ENCODE measurements at regions of chr11 and their contacts with region 1.

Region 1: GRCh38 chr11:58788355-58789023 is 56.0 kb downstream of the GLYATL2 start:
- DNase-seq: peak; percentile 67
- ATAC-seq: peak; percentile 98
- H3K4me3 ChIP-seq: no peak overlapping the region
- H3K27ac ChIP-seq: no peak overlapping the region
- H3K4me1 ChIP-seq: peaks cover 7% of the 10 kb centered on the region
- H3K27me3 ChIP-seq: no peaks in the 10 kb centered on the region
- CTCF ChIP-seq: peak; percentile 92
- EP300 ChIP-seq: no peak
- POLR2A ChIP-seq: no peak
- RAD21 ChIP-seq: peak; percentile 85

Region 2: GRCh38 chr11:58524232-58525036 is 264.1 kb before region 1 on chr11:
- CTCF ChIA-PET with region 1: no interaction called
- POLR2A ChIA-PET with region 1: no interaction called
- in situ Hi-C with region 1: loop called (anchors 25 kb)
- intact Hi-C with region 1: no loop called
- DNase-seq: peak; percentile 68
- ATAC-seq: peak; percentile 99
- H3K4me3 ChIP-seq: no peak overlapping the region; a peak in 1 of 6 replicates
- H3K27ac ChIP-seq: no peak overlapping the region
- H3K4me1 ChIP-seq: peaks cover 6% of the 10 kb centered on the region
- H3K27me3 ChIP-seq: 0 out of 5 replicates have a peak, but pooled peaks cover 0 to 4% of the 10 kb centered on the region in 2 experiments
- CTCF ChIP-seq: peak; percentile 70
- EP300 ChIP-seq: no peak
- POLR2A ChIP-seq: no peak
- RAD21 ChIP-seq: no peak

Region 3: DNA sequence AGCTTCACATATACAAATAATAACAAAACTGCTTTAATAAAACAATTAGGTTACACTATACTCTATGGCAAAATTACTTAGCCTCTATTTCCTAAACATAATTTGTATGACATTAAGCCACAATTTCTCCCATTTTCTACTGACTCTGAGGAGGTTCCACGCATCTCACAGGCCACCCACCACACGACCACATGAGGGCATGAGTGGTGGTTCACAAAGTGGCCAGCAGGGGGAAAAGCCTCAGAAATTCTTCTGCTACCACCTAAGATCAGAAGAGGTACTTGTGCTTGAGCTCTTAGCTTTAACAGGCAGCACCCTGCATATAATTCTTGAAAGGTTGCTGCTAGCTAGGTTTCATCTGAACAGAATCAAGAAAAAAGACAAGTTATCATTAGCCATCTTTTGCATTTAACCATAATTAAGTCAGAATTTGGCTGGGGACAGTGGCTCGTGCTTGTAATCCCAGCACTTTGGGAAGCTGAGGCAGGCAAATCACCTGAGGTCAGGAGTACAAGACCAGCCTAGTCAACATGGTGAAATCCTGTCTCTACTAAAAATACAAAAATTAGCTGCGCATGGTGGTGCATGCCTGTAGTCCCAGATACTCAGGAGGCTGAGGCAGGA is 220.5 kb before region 1 on chr11:
- CTCF ChIA-PET with region 1: interaction called, 3 read pairs
- POLR2A ChIA-PET with region 1: no interaction called
- in situ Hi-C with region 1: no loop called
- intact Hi-C with region 1: loop called (anchors 5 kb)
- DNase-seq: peak; percentile 49
- ATAC-seq: peak; percentile 94
- H3K4me3 ChIP-seq: no peak overlapping the region
- H3K27ac ChIP-seq: no peak overlapping the region
- H3K4me1 ChIP-seq: peaks cover 8% of the 10 kb centered on the region
- H3K27me3 ChIP-seq: no peaks in the 10 kb centered on the region
- CTCF ChIP-seq: peak; percentile 67
- EP300 ChIP-seq: no peak
- POLR2A ChIP-seq: no peak
- RAD21 ChIP-seq: 0 out of 2 replicates have a peak, but pooled peaks have one; percentile 18

Region 4: DNA sequence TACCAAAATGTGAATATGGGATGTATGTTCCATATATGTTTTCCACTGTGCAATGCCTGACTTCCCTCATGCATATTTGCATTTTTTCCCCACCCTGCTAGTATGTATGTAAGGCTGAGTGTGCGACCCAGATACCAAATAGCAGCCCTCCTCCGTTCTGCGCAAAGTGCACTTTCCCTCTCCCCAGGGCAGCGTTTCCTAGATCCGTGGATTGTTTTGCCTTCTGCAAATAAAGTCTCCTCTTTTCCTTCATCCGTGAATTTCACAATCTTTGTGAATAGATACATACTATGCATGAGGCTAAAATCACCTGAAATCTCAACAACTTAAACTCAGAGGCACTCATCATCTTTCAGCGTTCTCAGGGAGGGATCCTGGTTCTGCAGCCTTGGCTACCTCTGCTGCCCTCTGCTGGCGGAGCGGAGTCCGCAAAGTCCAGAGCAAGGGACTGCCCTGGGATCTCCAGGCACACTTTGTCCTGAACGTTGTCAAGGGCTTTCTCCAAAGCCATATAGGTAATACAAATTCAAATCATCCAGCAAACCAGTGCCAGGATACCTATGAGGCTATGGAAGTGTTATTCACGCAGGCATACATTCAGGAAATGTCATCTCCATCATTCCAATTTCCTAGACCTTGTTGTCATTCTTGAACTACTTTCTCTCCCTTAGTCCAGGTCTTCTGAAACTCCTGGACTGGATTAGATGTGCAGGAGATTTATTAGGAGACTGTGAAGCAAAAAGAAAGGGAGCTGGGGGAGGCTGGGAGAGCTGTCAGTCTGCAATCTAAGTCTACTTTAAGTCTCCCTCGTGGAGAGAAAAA is 112.9 kb before region 1 on chr11:
- CTCF ChIA-PET with region 1: interaction called, 27 read pairs
- POLR2A ChIA-PET with region 1: no interaction called
- in situ Hi-C with region 1: no loop called
- intact Hi-C with region 1: loop called (anchors 1 kb)
- DNase-seq: peak; percentile 32
- ATAC-seq: peak; percentile 99
- H3K4me3 ChIP-seq: no peak overlapping the region
- H3K27ac ChIP-seq: no peak overlapping the region
- H3K4me1 ChIP-seq: no peaks in the 10 kb centered on the region
- H3K27me3 ChIP-seq: no peaks in the 10 kb centered on the region
- CTCF ChIP-seq: peak; percentile 90
- EP300 ChIP-seq: no peak
- POLR2A ChIP-seq: no peak
- RAD21 ChIP-seq: peak; percentile 45; the same call in 1 of the 2 replicates

Region 5: GRCh38 chr11:58770627-58771457 is 17.6 kb before region 1 on chr11:
- CTCF ChIA-PET with region 1: no interaction called
- POLR2A ChIA-PET with region 1: no interaction called
- in situ Hi-C with region 1: no loop called
- intact Hi-C with region 1: no loop called
- DNase-seq: no peak
- ATAC-seq: no peak
- H3K4me3 ChIP-seq: no peak overlapping the region
- H3K27ac ChIP-seq: no peak overlapping the region
- H3K4me1 ChIP-seq: peaks cover 43% of the 10 kb centered on the region
- H3K27me3 ChIP-seq: no peaks in the 10 kb centered on the region; a peak in 1 of 5 replicates
- CTCF ChIP-seq: no peak
- EP300 ChIP-seq: no peak
- POLR2A ChIP-seq: no peak
- RAD21 ChIP-seq: no peak

Region 6: DNA sequence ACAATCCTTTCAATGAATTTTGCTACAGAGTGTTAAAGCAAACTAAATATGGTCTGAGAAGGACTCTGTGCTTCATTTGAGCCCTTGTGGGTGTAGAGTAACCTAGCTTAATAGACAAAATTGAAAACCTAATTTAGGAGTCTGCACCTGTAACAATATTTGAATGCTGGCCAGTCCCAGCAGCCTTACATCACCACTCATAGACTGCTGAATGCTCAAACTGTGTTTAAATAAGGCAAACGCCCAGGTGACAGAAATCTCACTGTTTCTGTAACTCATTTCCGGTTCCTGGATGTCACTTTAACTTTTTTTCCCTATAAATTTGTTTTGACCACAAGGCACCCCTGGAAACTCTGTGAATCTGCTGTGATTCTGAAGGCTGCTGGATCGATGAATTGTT is 252.1 kb after region 1 on chr11:
- CTCF ChIA-PET with region 1: no interaction called
- POLR2A ChIA-PET with region 1: no interaction called
- in situ Hi-C with region 1: no loop called
- intact Hi-C with region 1: no loop called
- DNase-seq: no peak
- ATAC-seq: no peak
- H3K4me3 ChIP-seq: no peak overlapping the region
- H3K27ac ChIP-seq: no peak overlapping the region
- H3K4me1 ChIP-seq: no peaks in the 10 kb centered on the region
- H3K27me3 ChIP-seq: no peaks in the 10 kb centered on the region
- CTCF ChIP-seq: no peak
- EP300 ChIP-seq: no peak
- POLR2A ChIP-seq: no peak
- RAD21 ChIP-seq: no peak

Measured in HepG2 (cell line).